GM10248 (cell line): ENCODE measurements at regions of chr5 and their contacts with region 1.

Region 1: DNA sequence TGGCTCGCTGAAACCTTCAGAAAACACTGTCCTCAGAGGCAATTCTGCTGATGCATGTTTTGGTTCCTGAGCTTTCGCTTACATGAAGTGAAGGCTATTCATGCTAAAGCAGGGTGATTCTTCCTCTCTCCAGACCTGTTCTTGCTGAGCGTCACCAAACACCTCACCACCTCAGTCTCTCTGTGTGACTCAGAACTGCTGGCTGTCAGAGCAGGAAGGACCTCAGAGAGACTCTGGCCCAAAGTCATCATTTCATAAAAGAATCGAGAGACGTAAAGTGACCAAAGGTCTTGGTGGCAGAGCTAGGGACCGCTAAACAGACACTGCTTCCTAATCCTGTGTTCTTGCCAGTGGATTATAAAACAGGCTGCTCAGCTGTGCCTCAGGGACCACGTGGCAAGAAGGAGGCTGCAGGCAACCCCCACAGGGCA is 73.8 kb downstream of the LHFPL2 start:
- DNase-seq: peak; percentile 29
- CTCF ChIP-seq: no peak

Region 2: GRCh38 chr5:78562714-78563330 is 11.9 kb before region 1 on chr5:
- CTCF ChIA-PET with region 1: interaction called, 14 read pairs
- POLR2A ChIA-PET with region 1: no interaction called
- DNase-seq: no peak
- CTCF ChIP-seq: no peak